CD4-positive, alpha-beta memory T cell (primary cell): ENCODE measurements at regions of chr21 and their contacts with region 1.

Region 1: DNA sequence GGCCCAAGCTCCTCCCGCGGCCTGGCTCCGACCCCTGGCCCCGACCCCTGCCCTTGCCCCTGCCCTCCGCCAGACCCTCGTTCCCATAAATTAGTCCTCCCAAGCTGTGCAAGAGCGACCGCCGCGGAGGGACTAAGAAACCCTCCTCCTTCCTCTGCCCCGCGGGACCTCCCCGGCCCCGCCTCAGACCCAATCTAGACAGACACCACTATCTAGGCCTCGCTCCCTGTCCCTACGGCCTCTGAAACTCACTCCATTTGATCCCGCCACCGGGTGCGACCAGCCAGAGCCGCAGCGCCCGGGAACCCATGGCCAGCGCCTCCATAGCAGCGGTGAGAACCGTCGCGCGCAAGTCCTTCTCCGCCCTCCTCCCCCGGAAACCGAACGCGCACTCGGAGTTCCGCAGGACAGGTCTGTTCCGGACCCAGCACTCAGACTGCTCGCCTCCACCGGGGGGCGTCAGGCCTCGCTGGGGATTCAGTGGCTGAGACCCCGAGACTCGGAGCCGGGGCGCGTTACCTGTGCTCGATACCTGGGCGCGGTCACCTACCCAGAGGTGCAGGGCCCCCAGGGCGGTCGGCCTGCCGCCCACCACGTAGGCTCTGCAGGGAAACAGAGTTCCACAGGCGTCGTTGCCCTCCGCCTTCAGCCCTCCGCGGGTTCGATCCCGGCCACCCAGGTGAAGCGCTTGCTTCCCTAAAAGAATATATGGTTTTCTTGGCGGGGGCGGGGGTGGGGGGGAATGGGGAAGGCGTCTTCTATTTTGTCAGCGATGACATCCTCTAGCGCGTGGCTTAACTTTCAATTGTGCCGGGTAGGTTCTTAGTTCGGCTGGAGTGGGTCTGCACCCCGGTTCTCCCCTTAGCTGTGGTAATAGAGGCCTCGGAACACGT is at the start of gene MRPL39:
- DNase-seq: peak; percentile 82 to 86 (median 85)
- H3K4me3 ChIP-seq: peak within 1 kb of the TSS; percentile 74 to 85
- H3K4me3 Mint-ChIP-seq: peak within 1 kb of the TSS; percentile 100
- H3K27ac ChIP-seq: peak within 1 kb of the TSS; percentile 76
- H3K27ac Mint-ChIP-seq: peak within 1 kb of the TSS; percentile 92 to 100 (median 98)
- H3K4me1 ChIP-seq: peaks cover 38% of the 10 kb centered on the region
- H3K4me1 Mint-ChIP-seq: peaks cover 23 to 47% (median 37%) of the 10 kb centered on the region in 4 donors
- H3K27me3 ChIP-seq: no peaks in the 10 kb centered on the region
- H3K27me3 Mint-ChIP-seq: no peaks in the 10 kb centered on the region
- total RNA-seq, gene MRPL39: 19.1 to 21.2 TPM

Region 2: GRCh38 chr21:25457411-25457810 is 150.0 kb before region 1 on chr21:
- CTCF ChIA-PET with region 1: interaction called, 3 read pairs
- POLR2A ChIA-PET with region 1: no interaction called
- intact Hi-C with region 1: loop called (anchors 2 kb)
- DNase-seq: peak in 4 of 5 donors; percentile 46 to 69 (median 61)
- H3K4me3 ChIP-seq: no peak overlapping the region
- H3K4me3 Mint-ChIP-seq: peak overlapping the region; percentile 72 to 93 (median 85)
- H3K27ac ChIP-seq: peak overlapping the region; percentile 57
- H3K27ac Mint-ChIP-seq: peak overlapping the region; percentile 54 to 98 (median 94)
- H3K4me1 ChIP-seq: peaks cover 10% of the 10 kb centered on the region
- H3K4me1 Mint-ChIP-seq: peaks cover 17 to 23% (median 20%) of the 10 kb centered on the region in 4 donors
- H3K27me3 ChIP-seq: no peaks in the 10 kb centered on the region
- H3K27me3 Mint-ChIP-seq: no peaks in the 10 kb centered on the region

Region 3: GRCh38 chr21:25518491-25518911 is 88.9 kb before region 1 on chr21:
- CTCF ChIA-PET with region 1: no interaction called
- POLR2A ChIA-PET with region 1: no interaction called
- intact Hi-C with region 1: no loop called
- DNase-seq: peak in 1 of 5 donors; percentile 13
- H3K4me3 ChIP-seq: no peak overlapping the region
- H3K4me3 Mint-ChIP-seq: no peak overlapping the region
- H3K27ac ChIP-seq: no peak overlapping the region
- H3K27ac Mint-ChIP-seq: no peak overlapping the region
- H3K4me1 ChIP-seq: no peaks in the 10 kb centered on the region
- H3K4me1 Mint-ChIP-seq: no peaks in the 10 kb centered on the region
- H3K27me3 ChIP-seq: no peaks in the 10 kb centered on the region
- H3K27me3 Mint-ChIP-seq: no peaks in the 10 kb centered on the region

Region 4: DNA sequence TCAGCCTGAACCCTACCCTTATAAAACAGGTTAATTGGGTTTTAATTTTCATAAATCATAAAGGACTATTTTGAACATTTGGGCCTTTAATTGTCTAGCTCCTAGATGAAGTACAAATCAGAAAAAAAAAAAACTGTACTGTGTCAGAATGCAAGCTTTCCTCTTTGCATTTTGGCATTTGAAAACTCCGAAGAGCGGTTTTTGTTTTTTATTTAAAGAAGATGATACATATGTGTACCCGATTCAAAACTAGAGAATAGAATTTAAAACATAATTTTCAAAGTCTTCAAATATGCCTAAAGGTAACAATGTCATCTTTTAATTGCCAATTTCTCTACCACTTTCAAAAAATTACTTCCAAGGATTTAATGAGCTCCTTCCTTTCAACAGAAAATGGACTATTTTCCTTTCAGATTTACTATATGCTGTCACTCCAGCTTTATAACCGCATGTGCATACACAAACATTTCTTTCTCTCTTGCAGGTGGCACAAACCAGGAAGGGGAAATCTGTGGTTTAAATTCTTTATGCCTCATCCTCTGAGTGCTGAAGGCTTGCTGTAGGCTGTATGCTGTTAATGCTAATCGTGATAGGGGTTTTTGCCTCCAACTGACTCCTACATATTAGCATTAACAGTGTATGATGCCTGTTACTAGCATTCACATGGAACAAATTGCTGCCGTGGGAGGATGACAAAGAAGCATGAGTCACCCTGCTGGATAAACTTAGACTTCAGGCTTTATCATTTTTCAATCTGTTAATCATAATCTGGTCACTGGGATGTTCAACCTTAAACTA is 33.8 kb before region 1 on chr21:
- CTCF ChIA-PET with region 1: interaction called, 12 read pairs
- POLR2A ChIA-PET with region 1: interaction called, 21 read pairs
- intact Hi-C with region 1: loop called (anchors 1 kb)
- DNase-seq: peak; percentile 60 to 84 (median 67)
- H3K4me3 ChIP-seq: peak overlapping the region in 1 of 2 donors; percentile 38
- H3K4me3 Mint-ChIP-seq: peak overlapping the region; percentile 75 to 89 (median 86)
- H3K27ac ChIP-seq: peak overlapping the region; percentile 74
- H3K27ac Mint-ChIP-seq: peak overlapping the region; percentile 87 to 97 (median 92)
- H3K4me1 ChIP-seq: peaks cover 75% of the 10 kb centered on the region
- H3K4me1 Mint-ChIP-seq: peaks cover 47 to 76% (median 64%) of the 10 kb centered on the region in 4 donors
- H3K27me3 ChIP-seq: no peaks in the 10 kb centered on the region
- H3K27me3 Mint-ChIP-seq: no peaks in the 10 kb centered on the region

Region 5: GRCh38 chr21:25639551-25640201 is 32.3 kb after region 1 on chr21:
- CTCF ChIA-PET with region 1: interaction called, 13 read pairs
- POLR2A ChIA-PET with region 1: no interaction called
- intact Hi-C with region 1: loop called (anchors 1 kb)
- DNase-seq: peak; percentile 36 to 52 (median 42)
- H3K4me3 ChIP-seq: peak overlapping the region; percentile 1 to 55
- H3K4me3 Mint-ChIP-seq: peak overlapping the region; percentile 72 to 87 (median 82)
- H3K27ac ChIP-seq: no peak overlapping the region
- H3K27ac Mint-ChIP-seq: peak overlapping the region in 1 of 7 donors; percentile 20
- H3K4me1 ChIP-seq: peaks cover 18% of the 10 kb centered on the region
- H3K4me1 Mint-ChIP-seq: peaks cover 9 to 20% (median 13%) of the 10 kb centered on the region in 4 donors
- H3K27me3 ChIP-seq: peaks cover 16% of the 10 kb centered on the region
- H3K27me3 Mint-ChIP-seq: peaks cover 22 to 26% of the 10 kb centered on the region in 2 donors

Region 6: DNA sequence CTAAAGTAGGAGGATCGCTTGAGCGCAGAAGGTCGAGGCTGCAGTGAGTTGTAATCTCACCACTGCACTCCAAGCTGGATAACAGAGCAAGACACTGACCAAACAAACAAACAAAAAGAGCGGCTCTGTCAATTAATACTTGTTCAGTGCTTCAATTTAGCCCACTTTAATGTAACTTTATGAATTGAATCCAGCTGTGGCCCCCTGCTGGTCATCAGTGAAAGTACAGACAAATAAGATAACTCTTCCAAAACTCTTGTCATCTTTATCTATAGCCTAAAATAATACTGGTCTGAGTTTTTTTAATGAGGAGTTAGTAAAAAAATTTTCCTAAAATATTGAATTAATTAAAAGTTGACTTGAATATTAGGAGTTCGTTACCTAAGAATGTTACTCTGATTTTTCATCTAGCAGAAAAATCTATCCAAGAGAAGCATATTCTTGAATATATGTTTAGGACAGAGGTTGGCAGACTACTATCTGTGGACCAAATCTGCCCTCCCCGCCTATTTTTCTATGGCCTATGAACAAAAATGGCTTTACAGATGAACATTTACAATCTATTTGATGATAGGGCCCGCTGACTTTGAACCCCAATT is 101.2 kb after region 1 on chr21:
- CTCF ChIA-PET with region 1: interaction called, 40 read pairs
- POLR2A ChIA-PET with region 1: interaction called, 5 read pairs
- intact Hi-C with region 1: loop called (anchors 1 kb)
- DNase-seq: peak in 4 of 5 donors; percentile 38 to 48 (median 46)
- H3K4me3 ChIP-seq: no peak overlapping the region
- H3K4me3 Mint-ChIP-seq: no peak overlapping the region
- H3K27ac ChIP-seq: no peak overlapping the region
- H3K27ac Mint-ChIP-seq: no peak overlapping the region
- H3K4me1 ChIP-seq: no peaks in the 10 kb centered on the region
- H3K4me1 Mint-ChIP-seq: no peaks in the 10 kb centered on the region
- H3K27me3 ChIP-seq: no peaks in the 10 kb centered on the region
- H3K27me3 Mint-ChIP-seq: no peaks in the 10 kb centered on the region

Region 7: GRCh38 chr21:25801217-25802014 is 194.0 kb after region 1 on chr21:
- CTCF ChIA-PET with region 1: interaction called, 10 read pairs
- POLR2A ChIA-PET with region 1: no interaction called
- intact Hi-C with region 1: loop called (anchors 1 kb)
- DNase-seq: peak; percentile 82 to 85 (median 83)
- H3K4me3 ChIP-seq: no peak overlapping the region
- H3K4me3 Mint-ChIP-seq: peak overlapping the region in 6 of 8 donors; percentile 5 to 68 (median 51)
- H3K27ac ChIP-seq: no peak overlapping the region
- H3K27ac Mint-ChIP-seq: peak overlapping the region in 3 of 7 donors; percentile 1 to 61 (median 30)
- H3K4me1 ChIP-seq: peaks cover 4% of the 10 kb centered on the region
- H3K4me1 Mint-ChIP-seq: peaks cover 5 to 9% (median 7%) of the 10 kb centered on the region in 4 donors
- H3K27me3 ChIP-seq: no peaks in the 10 kb centered on the region
- H3K27me3 Mint-ChIP-seq: peaks cover 13 to 14% of the 10 kb centered on the region in 2 donors

Region 8: GRCh38 chr21:26170471-26171257 is 563.3 kb after region 1 on chr21 and contains the start of gene APP:
- CTCF ChIA-PET with region 1: interaction called, 4 read pairs
- POLR2A ChIA-PET with region 1: interaction called, 5 read pairs
- intact Hi-C with region 1: loop called (anchors 1 kb)
- DNase-seq: peak; percentile 77 to 91 (median 88)
- H3K4me3 ChIP-seq: peak within 1 kb of the TSS; percentile 64 to 72
- H3K4me3 Mint-ChIP-seq: peak within 1 kb of the TSS; percentile 88 to 99 (median 96)
- H3K27ac ChIP-seq: peak within 1 kb of the TSS; percentile 32
- H3K27ac Mint-ChIP-seq: peak within 1 kb of the TSS in 6 of 7 donors; percentile 74 to 96 (median 85)
- H3K4me1 ChIP-seq: peaks cover 10% of the 10 kb centered on the region
- H3K4me1 Mint-ChIP-seq: peaks cover 11 to 27% (median 15%) of the 10 kb centered on the region in 4 donors
- H3K27me3 ChIP-seq: no peaks in the 10 kb centered on the region
- H3K27me3 Mint-ChIP-seq: peaks cover 1 to 6% of the 10 kb centered on the region in 2 donors
- total RNA-seq, gene APP: 53.3 to 57.9 TPM